Motor neuron (in vitro differentiated cells): ENCODE measurements at regions of chr11 and their contacts with region 1.

Region 1: DNA sequence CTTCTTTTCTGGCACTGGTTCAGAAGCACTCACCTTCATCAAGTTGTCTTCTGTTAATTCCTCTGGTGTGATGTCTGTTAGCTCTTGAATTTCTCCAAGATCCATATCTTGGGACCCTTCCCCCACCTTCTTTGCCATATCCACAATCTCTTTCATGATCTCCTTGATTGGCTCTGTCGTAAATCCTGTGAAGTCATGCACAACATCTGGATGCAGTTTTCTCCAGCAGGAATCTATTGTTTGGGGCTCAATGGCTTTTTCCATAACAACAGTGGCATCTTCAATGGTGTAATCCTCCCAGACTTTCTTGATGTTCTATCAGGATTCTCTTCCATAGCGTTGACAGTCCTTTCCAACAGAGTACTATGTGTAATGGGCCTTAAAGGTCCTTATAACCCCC is 96.9 kb downstream of the CSTPP1 start:
- ATAC-seq: no peak
- H3K4me3 ChIP-seq: no peak overlapping the region
- H3K27ac ChIP-seq: no peak overlapping the region
- H3K4me1 ChIP-seq: peaks cover 0 to 3% of the 10 kb centered on the region in 2 donors

Region 2: GRCh38 chr11:47143322-47143721 is 109.9 kb after region 1 on chr11:
- in situ Hi-C with region 1: loop called in 1 of 9 experiments (anchors 25 kb)
- ATAC-seq: peak; percentile 25 to 98 (median 86)
- H3K4me3 ChIP-seq: no peak overlapping the region
- H3K27ac ChIP-seq: no peak overlapping the region
- H3K4me1 ChIP-seq: no peaks in the 10 kb centered on the region